ENCODE measurements at regions of chr11 and their contacts with region 1.

Region 1: DNA sequence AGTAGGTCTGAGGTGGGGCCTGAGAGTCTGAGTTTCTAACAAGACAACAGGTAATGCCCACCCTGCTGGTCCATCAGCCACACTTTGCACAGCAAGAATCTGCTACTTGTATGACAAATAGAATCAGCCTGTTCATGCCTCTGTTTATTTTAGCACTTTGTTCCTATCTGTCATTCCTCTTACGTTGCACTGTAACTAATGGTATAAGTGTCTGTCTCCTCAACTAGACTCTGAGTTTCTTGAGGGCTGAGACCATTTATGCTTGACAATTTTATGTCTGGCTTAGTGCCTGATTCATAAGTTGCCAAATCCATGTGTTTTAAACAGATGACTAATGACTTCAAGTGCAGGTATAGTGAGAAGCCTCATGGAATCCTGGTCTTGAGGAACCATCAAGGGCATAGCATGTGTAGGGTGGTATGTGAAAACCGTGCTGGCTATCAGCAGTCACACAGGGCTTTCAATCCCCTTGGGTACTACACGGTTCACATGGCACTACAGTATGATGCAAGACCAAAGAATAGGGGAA is 209.7 kb downstream of the C11orf91 start:
- DNase-seq: no peak

Region 2: DNA sequence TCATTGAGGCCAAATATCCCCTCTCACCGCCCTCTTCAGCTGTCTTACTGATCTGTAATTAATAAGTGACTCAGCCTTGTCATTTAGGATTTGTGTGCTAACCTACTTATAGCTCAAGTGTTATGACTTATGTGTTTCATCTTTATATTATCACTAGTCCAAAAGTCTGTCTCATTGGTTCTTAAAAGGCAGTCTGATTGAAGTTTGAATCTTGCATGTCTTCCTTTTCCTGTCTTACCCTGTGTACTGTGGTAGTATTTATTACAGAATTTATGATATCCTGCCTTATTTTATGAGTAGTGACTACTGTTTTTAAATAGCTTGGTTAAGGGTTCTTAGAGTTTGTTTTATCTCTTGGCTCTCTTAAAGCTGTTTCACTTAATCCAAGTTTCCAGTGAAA is 469.0 kb before region 1 on chr11:
- intact Hi-C with region 1: no loop called
- DNase-seq: no peak

Region 3: GRCh38 chr11:33539751-33540150 is 48.8 kb after region 1 on chr11:
- intact Hi-C with region 1: loop called in 1 of 2 experiments (anchors 1 kb)
- DNase-seq: no peak